WTC11 (cell line): ENCODE measurements at regions of chr9 and their contacts with region 1.

Region 1: DNA sequence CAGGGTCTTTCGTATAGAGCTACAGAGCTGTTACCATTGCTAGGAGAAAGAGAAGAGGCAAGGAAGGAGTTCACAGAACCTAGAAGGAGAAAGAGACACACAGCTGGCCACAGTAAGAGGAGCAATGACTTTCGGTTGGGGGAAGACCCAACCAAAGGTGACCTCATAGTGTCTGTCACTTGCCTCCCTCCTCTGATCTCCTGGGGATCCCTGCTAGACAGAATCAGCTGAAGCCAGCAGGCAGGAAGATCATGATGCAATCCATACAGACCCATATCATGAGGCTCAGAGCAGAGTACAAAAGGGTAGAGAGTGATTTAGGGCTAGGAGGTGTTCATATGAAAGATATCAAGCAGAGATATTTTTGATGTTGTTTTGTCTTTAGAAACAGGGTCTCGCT is 26.0 kb upstream of the EPB41L4B start:
- DNase-seq: no peak
- ATAC-seq: no peak
- H3K4me3 Mint-ChIP-seq: no peak overlapping the region
- H3K27ac Mint-ChIP-seq: no peak overlapping the region
- H3K4me1 Mint-ChIP-seq: peaks cover 11% of the 10 kb centered on the region
- H3K27me3 Mint-ChIP-seq: no peaks in the 10 kb centered on the region; the same call in 1 of the 2 replicates
- CTCF ChIP-seq: no peak

Region 2: GRCh38 chr9:109182940-109183798 is 163.7 kb before region 1 on chr9:
- CTCF ChIA-PET with region 1: interaction called, 26 read pairs
- POLR2A ChIA-PET with region 1: no interaction called
- DNase-seq: peak; percentile 64
- ATAC-seq: peak; percentile 77
- H3K4me3 Mint-ChIP-seq: no peak overlapping the region
- H3K27ac Mint-ChIP-seq: peak overlapping the region; percentile 4; the same call in 1 of the 2 replicates
- H3K4me1 Mint-ChIP-seq: peaks cover 3% of the 10 kb centered on the region; the same call in 1 of the 2 replicates
- H3K27me3 Mint-ChIP-seq: no peaks in the 10 kb centered on the region
- CTCF ChIP-seq: peak; percentile 35; the same call in 1 of the 2 replicates

Region 3: GRCh38 chr9:109206670-109207069 is 140.2 kb before region 1 on chr9:
- CTCF ChIA-PET with region 1: interaction called, 10 read pairs
- POLR2A ChIA-PET with region 1: no interaction called
- DNase-seq: peak; percentile 66
- ATAC-seq: peak; percentile 98
- H3K4me3 Mint-ChIP-seq: no peak overlapping the region
- H3K27ac Mint-ChIP-seq: no peak overlapping the region
- H3K4me1 Mint-ChIP-seq: no peaks in the 10 kb centered on the region
- H3K27me3 Mint-ChIP-seq: no peaks in the 10 kb centered on the region; the same call in 1 of the 2 replicates
- CTCF ChIP-seq: 0 out of 2 replicates have a peak, but pooled peaks have one; percentile 26

Region 4: GRCh38 chr9:109316207-109316640 is 30.7 kb before region 1 on chr9:
- CTCF ChIA-PET with region 1: interaction called, 12 read pairs
- POLR2A ChIA-PET with region 1: interaction called, 4 read pairs
- DNase-seq: no peak
- ATAC-seq: peak; percentile 6
- H3K4me3 Mint-ChIP-seq: no peak overlapping the region
- H3K27ac Mint-ChIP-seq: peak overlapping the region; percentile 47
- H3K4me1 Mint-ChIP-seq: peaks cover 77% of the 10 kb centered on the region
- H3K27me3 Mint-ChIP-seq: peaks cover 3% of the 10 kb centered on the region
- CTCF ChIP-seq: no peak

Region 5: GRCh38 chr9:109401168-109401989 is 54.5 kb after region 1 on chr9:
- CTCF ChIA-PET with region 1: interaction called, 10 read pairs
- POLR2A ChIA-PET with region 1: no interaction called
- DNase-seq: peak; percentile 86
- ATAC-seq: peak; percentile 96
- H3K4me3 Mint-ChIP-seq: no peak overlapping the region
- H3K27ac Mint-ChIP-seq: no peak overlapping the region
- H3K4me1 Mint-ChIP-seq: peaks cover 12% of the 10 kb centered on the region
- H3K27me3 Mint-ChIP-seq: no peaks in the 10 kb centered on the region
- CTCF ChIP-seq: peak; percentile 89

Region 6: GRCh38 chr9:109440797-109441287 is 93.9 kb after region 1 on chr9:
- CTCF ChIA-PET with region 1: interaction called, 10 read pairs
- POLR2A ChIA-PET with region 1: no interaction called
- DNase-seq: peak; percentile 58
- ATAC-seq: peak; percentile 97
- H3K4me3 Mint-ChIP-seq: no peak overlapping the region
- H3K27ac Mint-ChIP-seq: peak overlapping the region; percentile 77
- H3K4me1 Mint-ChIP-seq: peaks cover 9% of the 10 kb centered on the region
- H3K27me3 Mint-ChIP-seq: peaks cover 2% of the 10 kb centered on the region; the same call in 1 of the 2 replicates
- CTCF ChIP-seq: peak; percentile 61